ENCODE measurements at regions of chr2 and their contacts with region 1.

Region 1: GRCh38 chr2:201654616-201655384 is 11.5 kb upstream of the TMEM237 start:
- DNase-seq: peak; percentile 59

Region 2: GRCh38 chr2:201600906-201601305 is 53.9 kb before region 1 on chr2:
- in situ Hi-C with region 1: no loop called
- DNase-seq: no peak

Region 3: GRCh38 chr2:201696151-201696659 is 41.4 kb after region 1 on chr2:
- in situ Hi-C with region 1: loop called (anchors 5 kb)
- DNase-seq: peak; percentile 45

Region 4: GRCh38 chr2:201758234-201758633 is 103.4 kb after region 1 on chr2:
- in situ Hi-C with region 1: no loop called
- DNase-seq: no peak